ENCODE measurements at regions of chr15 and their contacts with region 1.

Region 1: GRCh38 chr15:94324117-94324826 is 92.9 kb downstream of the MCTP2 start:
- DNase-seq: peak; percentile 44
- H3K4me3 Mint-ChIP-seq: no peak overlapping the region
- H3K27ac Mint-ChIP-seq: no peak overlapping the region
- H3K4me1 Mint-ChIP-seq: peaks cover 48% of the 10 kb centered on the region
- H3K27me3 Mint-ChIP-seq: no peaks in the 10 kb centered on the region

Region 2: DNA sequence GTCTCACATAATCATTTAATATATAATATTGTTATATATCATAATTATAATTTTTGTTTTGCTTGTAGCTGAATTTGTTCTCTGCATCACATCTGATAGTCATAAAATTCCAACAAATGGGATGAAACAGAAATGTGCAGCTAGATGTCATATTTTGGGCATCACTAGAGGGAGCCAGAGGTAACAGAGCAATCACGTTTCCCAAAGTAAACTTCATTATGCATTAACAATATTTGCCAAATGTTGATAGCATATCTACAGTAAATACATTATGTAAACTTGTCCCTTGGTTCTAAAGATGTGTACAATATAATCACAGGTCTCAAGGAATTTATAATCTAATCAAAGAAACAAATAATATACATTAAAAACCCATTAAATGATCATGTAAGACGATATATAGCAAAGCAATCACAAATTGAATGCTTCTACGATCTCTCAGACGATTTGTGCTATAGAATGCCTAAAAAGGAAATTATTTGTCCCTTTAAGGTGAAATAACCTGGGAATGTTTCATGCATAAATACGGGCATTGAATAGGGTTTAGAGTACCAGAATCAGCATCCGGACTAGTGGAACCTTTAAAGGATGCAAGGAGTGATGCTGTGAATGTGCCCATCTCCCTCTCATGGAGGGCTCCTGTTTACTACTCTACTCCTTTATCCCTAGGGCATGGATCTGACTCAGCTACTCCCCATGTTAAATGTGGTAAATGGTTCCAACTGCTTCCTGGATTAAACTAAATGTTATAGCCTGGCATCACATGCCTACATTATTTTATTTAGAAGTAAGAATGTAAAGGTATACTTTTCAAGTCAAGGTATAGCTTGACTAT is 327.0 kb before region 1 on chr15:
- intact Hi-C with region 1: loop called (anchors 1 kb)
- DNase-seq: no peak
- H3K4me3 Mint-ChIP-seq: no peak overlapping the region
- H3K27ac Mint-ChIP-seq: no peak overlapping the region
- H3K4me1 Mint-ChIP-seq: no peaks in the 10 kb centered on the region
- H3K27me3 Mint-ChIP-seq: peaks cover 20% of the 10 kb centered on the region

Region 3: DNA sequence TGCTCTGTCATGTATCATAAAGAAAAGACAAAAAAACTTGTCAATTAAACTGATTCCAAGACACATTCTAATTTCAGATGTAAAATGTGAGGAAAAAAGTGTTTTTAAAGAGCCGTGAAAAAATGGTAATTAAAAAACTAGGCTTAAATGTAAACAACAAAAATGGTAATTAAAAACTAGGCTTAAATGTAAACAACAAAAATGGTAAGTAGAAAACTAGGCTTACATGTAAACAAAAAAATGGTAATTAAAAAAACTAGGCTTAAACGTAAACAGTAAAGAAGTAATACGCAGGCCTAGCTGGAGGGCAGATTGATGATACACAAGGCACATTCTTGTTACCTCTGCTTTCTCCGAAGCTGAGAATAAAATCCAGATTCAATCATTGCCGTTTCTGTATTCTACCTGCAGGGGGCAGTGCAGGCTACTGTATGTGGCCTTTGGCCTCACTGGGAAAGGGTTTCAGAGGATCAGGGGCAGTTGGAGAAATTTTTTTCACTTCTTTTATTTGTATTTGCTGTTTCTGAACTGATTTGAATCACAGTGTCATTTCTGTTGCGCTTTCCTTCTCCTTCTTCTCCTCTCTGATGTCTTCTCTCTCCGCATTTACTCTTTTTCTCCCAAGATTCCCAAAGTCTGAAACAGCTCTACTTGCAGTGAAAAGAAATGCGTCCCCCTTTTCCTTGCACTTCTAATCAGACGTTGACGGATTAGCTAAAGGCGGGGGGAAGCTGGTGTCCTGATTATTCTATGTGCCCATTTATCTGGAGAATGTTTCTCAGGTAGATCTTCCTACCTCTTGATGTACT is 160.1 kb before region 1 on chr15:
- intact Hi-C with region 1: loop called (anchors 1 kb)
- DNase-seq: peak; percentile 44
- H3K4me3 Mint-ChIP-seq: no peak overlapping the region
- H3K27ac Mint-ChIP-seq: no peak overlapping the region
- H3K4me1 Mint-ChIP-seq: peaks cover 10% of the 10 kb centered on the region
- H3K27me3 Mint-ChIP-seq: peaks cover 2% of the 10 kb centered on the region

Region 4: DNA sequence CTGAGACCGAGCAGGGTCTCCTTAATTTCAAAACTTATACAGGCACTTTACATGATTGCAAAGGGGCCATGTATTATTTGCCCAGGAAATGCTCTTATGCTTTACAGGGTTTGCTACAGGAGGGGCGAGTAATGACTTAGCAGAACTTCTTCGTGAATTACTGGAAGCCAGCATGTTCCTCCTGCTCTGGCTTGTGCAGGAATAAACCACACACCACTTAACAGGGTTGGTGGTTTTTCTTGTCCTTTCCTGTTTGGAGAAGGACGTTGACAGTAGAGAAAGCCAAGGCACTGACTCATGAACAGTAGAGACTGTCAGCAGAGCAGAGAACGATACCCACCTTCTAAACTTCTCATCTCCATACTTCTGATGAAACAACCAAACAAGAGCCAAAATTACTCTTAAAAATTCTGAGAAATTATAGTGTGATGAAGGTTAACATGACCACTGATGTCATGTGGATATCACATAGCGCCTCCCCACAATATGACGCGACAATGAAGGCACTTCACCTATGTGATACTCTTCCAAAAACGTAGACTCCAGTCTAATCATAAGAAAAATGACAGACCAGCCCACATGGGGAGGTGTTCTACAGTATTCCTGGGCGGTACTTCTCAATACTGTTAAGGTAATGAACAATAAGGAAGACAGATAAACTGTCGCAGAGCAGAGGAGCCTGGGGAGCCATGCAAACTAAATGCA is 117.7 kb before region 1 on chr15:
- intact Hi-C with region 1: loop called (anchors 1 kb)
- DNase-seq: peak; percentile 69
- H3K4me3 Mint-ChIP-seq: peak overlapping the region; percentile 79
- H3K27ac Mint-ChIP-seq: peak overlapping the region; percentile 97
- H3K4me1 Mint-ChIP-seq: peaks cover 41% of the 10 kb centered on the region
- H3K27me3 Mint-ChIP-seq: no peaks in the 10 kb centered on the region

Region 5: DNA sequence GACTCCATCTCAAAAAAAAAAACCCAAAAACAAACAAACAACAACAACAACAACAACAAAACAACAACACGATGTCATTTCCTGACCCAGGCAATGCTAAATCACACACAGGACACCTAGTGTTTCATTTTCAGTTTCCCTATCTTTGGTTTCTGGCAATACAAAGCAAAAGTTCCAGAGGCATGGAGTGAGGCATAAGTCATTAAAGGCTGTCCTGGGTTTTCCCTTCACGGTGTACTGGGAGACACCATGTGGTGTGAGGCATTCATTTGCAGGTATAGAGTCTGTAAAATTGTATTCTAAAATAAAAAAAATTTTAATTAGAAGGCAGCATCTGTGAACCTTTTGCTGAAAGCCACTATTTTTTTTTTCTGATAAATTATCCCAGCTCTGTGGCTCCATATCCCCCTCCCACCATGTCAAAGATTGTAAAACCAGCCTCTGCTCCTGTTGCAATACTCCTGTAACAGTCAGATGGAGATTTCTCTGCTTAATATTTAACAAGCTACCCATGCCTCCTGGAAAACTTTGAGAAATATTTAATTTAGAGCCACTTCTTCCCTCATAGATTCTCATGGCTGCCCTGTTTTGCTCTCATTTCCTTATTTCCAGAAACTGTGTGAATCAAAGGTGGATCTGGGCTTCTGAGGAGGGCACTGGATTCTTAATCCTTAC is 231.7 kb after region 1 on chr15:
- intact Hi-C with region 1: no loop called
- DNase-seq: no peak
- H3K4me3 Mint-ChIP-seq: no peak overlapping the region
- H3K27ac Mint-ChIP-seq: no peak overlapping the region
- H3K4me1 Mint-ChIP-seq: no peaks in the 10 kb centered on the region
- H3K27me3 Mint-ChIP-seq: peaks cover 15% of the 10 kb centered on the region